ENCODE measurements at regions of chr10 and their contacts with region 1.

Region 1: DNA sequence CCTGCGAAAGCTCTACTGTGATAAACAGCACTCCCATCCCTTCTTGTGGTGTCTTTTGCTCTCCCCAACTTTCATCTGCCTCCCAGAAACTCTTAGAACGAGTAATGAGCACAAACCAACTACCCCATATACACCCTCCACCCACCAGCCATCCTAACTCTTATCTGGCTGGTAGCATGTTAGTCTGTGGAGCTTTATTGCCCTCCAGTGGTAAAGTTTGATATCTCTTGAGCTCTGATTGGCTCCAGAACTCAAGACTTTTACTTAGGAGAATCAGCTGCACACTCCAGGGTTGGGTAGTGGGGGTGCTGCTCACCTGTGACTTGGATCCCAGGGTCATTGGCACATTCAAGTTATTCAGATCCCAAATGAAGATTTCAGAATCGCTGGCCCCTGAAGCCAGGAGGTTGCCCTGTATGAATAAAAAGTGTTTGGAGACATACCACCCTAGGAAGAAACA is 10.9 kb downstream of the SEC31B start:
- H3K4me3 ChIP-seq: no peak overlapping the region
- H3K27ac ChIP-seq: no peak overlapping the region
- H3K4me1 ChIP-seq: no peaks in the 10 kb centered on the region
- CTCF ChIP-seq: peak; percentile 69

Region 2: GRCh38 chr10:99926925-99927720 is 581.6 kb before region 1 on chr10:
- CTCF ChIA-PET with region 1: no interaction called
- POLR2A ChIA-PET with region 1: no interaction called
- H3K4me3 ChIP-seq: no peak overlapping the region
- H3K27ac ChIP-seq: no peak overlapping the region
- H3K4me1 ChIP-seq: peaks cover 16% of the 10 kb centered on the region
- CTCF ChIP-seq: no peak

Region 3: DNA sequence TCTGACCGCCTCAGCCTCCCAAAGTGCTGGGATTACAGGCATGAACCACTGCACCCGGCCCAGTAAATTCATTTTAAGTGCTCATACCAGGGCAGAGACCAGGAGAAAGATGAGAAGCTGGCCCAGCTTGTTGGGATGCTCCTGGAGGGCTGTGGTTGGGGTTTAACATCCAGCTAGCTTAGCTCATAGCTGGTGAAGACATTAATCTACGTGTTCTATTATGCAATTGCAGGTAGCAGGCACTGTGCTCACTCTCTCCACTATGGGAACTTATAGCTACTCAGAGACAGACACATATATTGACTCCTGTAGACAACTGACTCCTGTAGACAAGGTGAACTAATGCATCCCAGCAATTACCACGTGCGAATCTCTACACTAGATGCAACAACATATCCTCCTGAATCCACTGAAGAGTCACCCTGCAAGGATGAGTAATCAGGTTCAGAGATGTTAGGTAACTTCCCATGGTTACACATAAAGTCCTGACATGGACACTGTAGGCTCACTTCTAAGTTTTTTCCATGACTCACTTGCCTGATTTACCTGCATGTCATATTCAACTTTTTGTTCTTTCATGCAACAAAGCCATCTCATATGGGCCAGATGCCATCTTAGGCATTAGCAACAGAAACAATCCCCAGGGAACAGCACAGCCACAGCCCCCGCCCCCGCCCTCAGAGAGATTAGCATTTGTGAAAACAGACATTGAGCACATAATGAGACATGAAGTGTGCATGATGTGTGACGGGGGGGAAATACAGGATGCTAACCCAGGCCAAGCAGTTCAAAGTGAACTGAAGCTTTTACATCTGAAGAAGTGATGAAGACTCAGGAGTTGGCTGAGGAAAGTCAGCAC is 360.1 kb before region 1 on chr10:
- CTCF ChIA-PET with region 1: no interaction called
- POLR2A ChIA-PET with region 1: no interaction called
- H3K4me3 ChIP-seq: no peak overlapping the region
- H3K27ac ChIP-seq: no peak overlapping the region
- H3K4me1 ChIP-seq: no peaks in the 10 kb centered on the region
- CTCF ChIP-seq: no peak

Region 4: GRCh38 chr10:100286051-100287033 is 222.4 kb before region 1 on chr10 and contains the start of gene BLOC1S2:
- CTCF ChIA-PET with region 1: no interaction called
- POLR2A ChIA-PET with region 1: no interaction called
- H3K4me3 ChIP-seq: peak within 1 kb of the TSS; percentile 74
- H3K27ac ChIP-seq: peak within 1 kb of the TSS; percentile 88
- H3K4me1 ChIP-seq: no peaks in the 10 kb centered on the region; the same call in 1 of the 2 replicates
- CTCF ChIP-seq: 0 out of 2 replicates have a peak, but pooled peaks have one; percentile 70

Region 5: GRCh38 chr10:100338434-100339036 is 170.2 kb before region 1 on chr10:
- CTCF ChIA-PET with region 1: interaction called, 23 read pairs
- POLR2A ChIA-PET with region 1: no interaction called
- H3K4me3 ChIP-seq: no peak overlapping the region
- H3K27ac ChIP-seq: no peak overlapping the region
- H3K4me1 ChIP-seq: no peaks in the 10 kb centered on the region
- CTCF ChIP-seq: peak; percentile 74

Region 6: GRCh38 chr10:100442530-100442929 is 66.2 kb before region 1 on chr10:
- CTCF ChIA-PET with region 1: interaction called, 14 read pairs
- POLR2A ChIA-PET with region 1: no interaction called
- H3K4me3 ChIP-seq: no peak overlapping the region
- H3K27ac ChIP-seq: no peak overlapping the region
- H3K4me1 ChIP-seq: no peaks in the 10 kb centered on the region
- CTCF ChIP-seq: no peak

Region 7: DNA sequence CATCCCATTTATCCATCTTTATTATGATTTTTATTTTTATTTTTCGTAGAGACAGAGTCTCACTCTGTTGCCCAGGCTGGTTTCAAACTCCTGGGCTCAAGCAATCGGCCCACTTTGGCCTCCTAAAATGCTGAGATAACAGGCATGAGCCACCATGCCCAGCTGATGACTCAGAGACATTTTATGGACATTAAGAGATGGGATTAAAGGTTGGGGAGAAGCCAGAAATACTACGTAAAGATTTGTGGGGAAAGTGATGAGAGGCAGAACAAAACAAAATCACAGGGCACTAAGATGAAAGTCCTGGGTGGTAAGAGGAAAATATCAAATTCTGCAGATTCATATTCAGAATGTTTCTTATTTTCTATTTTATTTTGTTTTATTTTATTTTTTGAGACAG is 38.4 kb before region 1 on chr10:
- CTCF ChIA-PET with region 1: interaction called, 10 read pairs
- POLR2A ChIA-PET with region 1: no interaction called
- H3K4me3 ChIP-seq: no peak overlapping the region
- H3K27ac ChIP-seq: no peak overlapping the region
- H3K4me1 ChIP-seq: no peaks in the 10 kb centered on the region
- CTCF ChIP-seq: no peak

Region 8: DNA sequence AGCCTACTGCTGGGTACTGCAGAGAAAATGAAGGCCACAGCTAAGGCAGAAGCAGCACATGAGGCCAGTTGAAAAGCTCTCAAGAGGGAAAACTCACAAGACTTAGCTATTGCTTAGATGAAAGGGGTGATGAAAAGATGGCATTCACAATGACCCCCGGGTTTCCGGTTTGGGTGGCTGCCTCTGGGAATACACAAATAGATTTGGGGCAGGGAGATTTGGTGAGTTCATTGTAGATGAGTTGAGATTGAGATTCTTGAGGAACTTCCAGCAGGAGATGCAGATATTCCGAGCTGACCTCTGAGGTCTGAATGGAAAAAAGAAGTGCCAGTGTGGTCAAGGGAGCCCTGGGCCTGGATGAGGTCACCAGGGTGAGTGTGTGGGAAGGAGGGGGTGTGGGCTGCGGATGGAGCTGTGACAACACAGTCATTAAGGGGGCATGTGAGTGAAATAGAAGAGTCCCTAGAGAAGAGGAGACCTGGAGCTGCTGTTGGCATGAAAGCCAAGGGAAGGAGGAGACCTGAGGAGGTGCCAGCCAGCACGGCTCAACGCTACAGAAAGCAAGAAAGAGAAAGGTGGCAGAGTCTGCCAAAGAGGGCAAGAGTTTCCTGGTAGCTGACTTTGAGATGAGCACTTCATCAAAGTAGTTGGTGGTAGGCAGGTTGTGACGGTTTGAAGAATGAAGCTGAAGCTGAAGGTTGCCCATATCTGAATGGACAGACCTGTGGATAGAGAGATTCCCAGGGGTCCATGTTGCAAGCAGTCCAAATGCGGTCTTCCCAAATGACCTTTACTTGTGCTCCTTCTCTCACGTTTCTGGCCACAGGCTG is 70.8 kb after region 1 on chr10:
- CTCF ChIA-PET with region 1: no interaction called
- POLR2A ChIA-PET with region 1: no interaction called
- H3K4me3 ChIP-seq: no peak overlapping the region
- H3K27ac ChIP-seq: no peak overlapping the region
- H3K4me1 ChIP-seq: no peaks in the 10 kb centered on the region
- CTCF ChIP-seq: no peak

Measured in HEK293 (cell line).